PC-3 (cell line): ENCODE measurements at regions of chr11 and their contacts with region 1.

Region 1: GRCh38 chr11:123054301-123055065 is 7.5 kb downstream of the HSPA8 start:
- DNase-seq: peak; percentile 89
- ATAC-seq: peak; percentile 82
- H3K4me3 ChIP-seq: no peak overlapping the region
- H3K27ac ChIP-seq: no peak overlapping the region
- H3K4me1 ChIP-seq: peaks cover 24% of the 10 kb centered on the region
- H3K27me3 ChIP-seq: no peaks in the 10 kb centered on the region
- CTCF ChIP-seq: peak; percentile 87

Region 2: GRCh38 chr11:122796128-122796717 is 258.3 kb before region 1 on chr11:
- CTCF ChIA-PET with region 1: no interaction called
- POLR2A ChIA-PET with region 1: interaction called, 15 read pairs
- intact Hi-C with region 1: no loop called
- DNase-seq: peak; percentile 79
- ATAC-seq: peak; percentile 69
- H3K4me3 ChIP-seq: no peak overlapping the region
- H3K27ac ChIP-seq: no peak overlapping the region
- H3K4me1 ChIP-seq: peaks cover 8% of the 10 kb centered on the region; the same call in 1 of the 2 replicates
- H3K27me3 ChIP-seq: no peaks in the 10 kb centered on the region
- CTCF ChIP-seq: peak; percentile 98

Region 3: DNA sequence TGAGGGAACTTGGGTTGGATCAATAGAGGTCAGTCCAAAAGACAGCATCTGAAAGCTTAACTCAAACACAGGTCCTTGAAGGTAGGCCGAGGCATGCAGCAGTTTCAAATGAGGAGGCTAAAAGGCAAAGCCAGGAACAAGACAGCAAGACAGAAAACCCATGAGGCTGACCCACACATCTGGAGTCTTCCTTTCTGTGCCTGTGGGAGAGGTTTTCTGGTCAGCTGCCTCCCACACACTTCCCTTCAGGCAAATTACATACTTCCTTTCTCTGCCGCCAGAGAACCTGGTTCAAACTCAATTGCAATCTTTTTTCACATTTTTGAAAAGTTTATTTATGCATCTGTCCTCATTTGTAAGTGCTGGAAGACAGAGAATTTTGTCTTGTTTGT is 246.0 kb before region 1 on chr11:
- CTCF ChIA-PET with region 1: no interaction called
- POLR2A ChIA-PET with region 1: interaction called, 15 read pairs
- intact Hi-C with region 1: no loop called
- DNase-seq: no peak
- ATAC-seq: no peak
- H3K4me3 ChIP-seq: no peak overlapping the region
- H3K27ac ChIP-seq: peak overlapping the region; percentile 12; the same call in 1 of the 2 replicates
- H3K4me1 ChIP-seq: peaks cover 22% of the 10 kb centered on the region
- H3K27me3 ChIP-seq: no peaks in the 10 kb centered on the region
- CTCF ChIP-seq: no peak

Region 4: DNA sequence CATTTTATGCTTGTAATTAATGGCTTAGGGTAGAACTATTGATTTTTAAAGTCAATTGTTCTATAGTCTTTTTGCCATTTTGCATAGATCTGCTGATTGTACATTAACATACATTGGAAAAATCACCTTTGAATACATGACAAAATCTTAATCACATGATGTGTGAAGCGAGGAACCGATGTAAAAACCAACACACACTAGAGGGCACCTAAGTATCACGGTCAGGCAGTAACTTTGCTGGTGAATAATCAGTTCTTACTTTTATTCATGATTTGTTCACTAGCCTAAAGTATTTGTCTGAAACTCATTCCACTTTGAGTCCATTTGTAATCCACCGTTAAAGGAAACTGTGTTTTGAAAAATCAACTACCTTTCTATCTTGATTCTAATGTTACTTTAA is 143.7 kb before region 1 on chr11:
- CTCF ChIA-PET with region 1: interaction called, 10 read pairs
- POLR2A ChIA-PET with region 1: no interaction called
- intact Hi-C with region 1: loop called (anchors 1 kb)
- DNase-seq: peak; percentile 53
- ATAC-seq: peak; percentile 50
- H3K4me3 ChIP-seq: no peak overlapping the region
- H3K27ac ChIP-seq: no peak overlapping the region
- H3K4me1 ChIP-seq: no peaks in the 10 kb centered on the region
- H3K27me3 ChIP-seq: no peaks in the 10 kb centered on the region
- CTCF ChIP-seq: peak; percentile 72